PC-3 (cell line): ENCODE measurements at regions of chr11 and their contacts with region 1.

Region 1: GRCh38 chr11:69088676-69089146 is 40.0 kb downstream of the TPCN2 start:
- DNase-seq: peak; percentile 93
- ATAC-seq: peak; percentile 82
- H3K4me3 ChIP-seq: peak overlapping the region; percentile 40; the same call in 1 of the 2 replicates
- H3K27ac ChIP-seq: 0 out of 2 replicates have a peak overlapping the region, but pooled peaks have one; percentile 12
- H3K4me1 ChIP-seq: peaks cover 17% of the 10 kb centered on the region
- H3K27me3 ChIP-seq: no peaks in the 10 kb centered on the region
- CTCF ChIP-seq: peak; percentile 88

Region 2: DNA sequence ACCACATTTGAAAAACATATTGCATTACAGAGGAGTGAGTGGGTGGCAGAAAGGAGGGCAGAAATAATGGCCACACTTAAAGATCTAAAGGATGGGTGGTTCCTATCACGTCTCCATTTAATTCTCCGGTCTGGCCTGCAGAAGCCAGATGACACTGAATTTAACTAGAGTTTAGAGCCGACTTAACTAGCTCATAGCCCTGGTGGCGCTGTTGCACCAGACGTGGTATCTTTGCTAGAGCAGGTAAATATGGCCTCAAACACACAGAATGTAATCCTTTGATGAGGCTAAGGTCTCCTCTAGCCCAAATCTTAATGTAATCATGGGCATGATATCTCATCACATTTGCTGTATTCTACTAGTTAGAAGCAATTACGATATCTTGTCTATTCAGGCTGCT is 455.9 kb before region 1 on chr11:
- CTCF ChIA-PET with region 1: no interaction called
- POLR2A ChIA-PET with region 1: no interaction called
- intact Hi-C with region 1: loop called (anchors 10 kb)
- DNase-seq: peak; percentile 88
- ATAC-seq: peak; percentile 97
- H3K4me3 ChIP-seq: no peak overlapping the region
- H3K27ac ChIP-seq: no peak overlapping the region
- H3K4me1 ChIP-seq: no peaks in the 10 kb centered on the region
- H3K27me3 ChIP-seq: peaks cover 14% of the 10 kb centered on the region
- CTCF ChIP-seq: peak; percentile 97

Region 3: GRCh38 chr11:68912254-68912653 is 176.5 kb before region 1 on chr11:
- CTCF ChIA-PET with region 1: no interaction called
- POLR2A ChIA-PET with region 1: no interaction called
- intact Hi-C with region 1: loop called (anchors 5 kb)
- DNase-seq: peak; percentile 52
- ATAC-seq: peak; percentile 81
- H3K4me3 ChIP-seq: no peak overlapping the region
- H3K27ac ChIP-seq: no peak overlapping the region
- H3K4me1 ChIP-seq: 0 out of 2 replicates have a peak, but pooled peaks cover 3% of the 10 kb centered on the region
- H3K27me3 ChIP-seq: no peaks in the 10 kb centered on the region
- CTCF ChIP-seq: no peak

Region 4: DNA sequence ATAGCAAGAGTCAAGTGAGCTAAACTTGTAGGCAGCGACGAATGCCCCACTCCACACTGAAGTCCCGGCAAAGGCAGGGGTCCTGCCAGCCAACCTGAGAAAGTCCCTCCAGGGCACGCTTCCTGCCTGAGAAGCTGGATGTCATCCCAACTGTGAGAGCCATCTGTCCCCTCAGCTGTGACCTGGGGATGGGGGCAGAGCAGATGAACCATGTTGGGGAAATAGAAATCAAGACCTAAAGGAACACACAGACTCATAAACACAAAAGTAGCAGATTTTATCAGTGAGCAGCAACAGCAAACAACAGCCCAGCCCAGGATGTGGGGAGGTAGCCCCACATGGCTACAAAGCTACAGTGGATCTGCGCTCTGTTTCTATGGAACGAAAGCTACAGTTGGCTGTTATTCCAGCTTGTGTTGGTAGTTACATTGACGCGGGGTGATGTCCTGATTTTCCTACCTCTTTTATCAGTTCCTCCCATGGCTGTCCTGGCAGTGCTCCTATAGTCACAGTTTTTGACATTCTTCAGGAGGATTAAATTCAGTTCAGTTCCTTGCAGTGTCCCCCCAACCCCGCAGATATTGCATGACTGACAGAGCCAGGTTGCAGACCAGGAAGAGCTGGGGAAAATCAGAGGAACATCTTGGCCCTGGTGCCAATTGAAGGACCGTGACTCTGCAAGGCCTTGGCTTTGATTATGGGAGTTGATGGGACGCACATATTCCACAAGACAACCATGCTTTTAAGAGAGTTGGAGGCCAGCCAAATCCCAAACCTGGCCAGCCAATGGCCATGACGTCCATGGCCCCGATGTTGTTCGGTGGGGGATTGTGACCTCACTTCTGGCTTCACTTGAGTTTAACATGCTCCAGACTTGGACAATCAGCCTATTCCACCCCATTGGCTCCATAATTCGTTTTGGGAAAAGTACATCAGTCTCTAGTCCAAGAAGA is 122.5 kb before region 1 on chr11:
- CTCF ChIA-PET with region 1: no interaction called
- POLR2A ChIA-PET with region 1: no interaction called
- intact Hi-C with region 1: loop called (anchors 5 kb)
- DNase-seq: no peak
- ATAC-seq: no peak
- H3K4me3 ChIP-seq: no peak overlapping the region
- H3K27ac ChIP-seq: no peak overlapping the region
- H3K4me1 ChIP-seq: no peaks in the 10 kb centered on the region
- H3K27me3 ChIP-seq: peaks cover 12% of the 10 kb centered on the region
- CTCF ChIP-seq: no peak

Region 5: DNA sequence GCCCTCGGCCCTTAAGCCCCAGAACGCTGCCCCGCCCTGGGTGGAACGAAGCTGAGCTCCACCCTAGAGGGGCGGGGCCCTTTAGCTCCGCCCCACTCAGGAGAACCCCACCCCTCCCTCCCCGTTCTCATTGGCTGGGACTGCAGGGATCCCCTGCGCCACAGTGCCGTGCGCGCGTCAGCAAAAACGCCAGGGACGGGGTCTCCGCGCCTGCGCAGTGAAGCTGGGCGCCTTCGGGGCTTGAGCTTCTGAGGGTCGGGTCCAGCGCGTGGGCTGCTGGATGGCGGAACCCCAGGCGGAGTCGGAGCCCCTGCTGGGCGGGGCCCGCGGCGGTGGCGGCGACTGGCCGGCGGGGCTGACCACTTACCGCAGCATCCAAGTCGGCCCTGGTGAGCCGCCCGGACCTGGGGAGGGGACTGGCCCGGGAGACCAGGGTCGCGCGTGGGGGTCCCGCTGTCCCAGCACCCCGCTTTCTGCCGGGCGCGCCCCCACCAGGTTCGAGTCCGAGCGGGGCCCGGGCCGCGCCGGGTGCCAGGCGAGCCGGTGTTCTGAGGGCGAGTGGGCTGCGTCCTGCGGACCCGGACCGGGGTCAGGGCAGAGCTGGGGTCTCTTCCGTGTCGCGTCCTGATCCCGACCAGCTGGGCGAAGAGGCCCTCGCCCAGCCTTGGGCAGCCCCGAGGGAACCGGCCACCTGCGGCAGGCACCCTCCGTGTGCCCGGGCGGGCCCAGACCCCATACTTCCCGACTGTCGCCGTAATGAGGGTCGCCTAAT is 39.8 kb before region 1 on chr11 and contains the start of gene TPCN2:
- CTCF ChIA-PET with region 1: no interaction called
- POLR2A ChIA-PET with region 1: no interaction called
- intact Hi-C with region 1: loop called (anchors 5 kb)
- DNase-seq: peak; percentile 99
- ATAC-seq: peak; percentile 91
- H3K4me3 ChIP-seq: peak within 1 kb of the TSS; percentile 93
- H3K27ac ChIP-seq: peak within 1 kb of the TSS; percentile 31
- H3K4me1 ChIP-seq: peaks cover 23% of the 10 kb centered on the region
- H3K27me3 ChIP-seq: no peaks in the 10 kb centered on the region
- CTCF ChIP-seq: no peak
- total RNA-seq, gene TPCN2: 13.0 and 14.5 TPM in 2 replicates

Region 6: GRCh38 chr11:69166218-69167115 is 77.8 kb after region 1 on chr11:
- CTCF ChIA-PET with region 1: no interaction called
- POLR2A ChIA-PET with region 1: no interaction called
- intact Hi-C with region 1: no loop called
- DNase-seq: peak; percentile 79
- ATAC-seq: peak; percentile 96
- H3K4me3 ChIP-seq: no peak overlapping the region; the same call in 1 of the 2 replicates
- H3K27ac ChIP-seq: no peak overlapping the region
- H3K4me1 ChIP-seq: peaks cover 13% of the 10 kb centered on the region
- H3K27me3 ChIP-seq: no peaks in the 10 kb centered on the region
- CTCF ChIP-seq: peak; percentile 43